Esophagus muscularis mucosa (tissue), 4 donors: ENCODE measurements at regions of chr2 and their contacts with region 1.

Region 1: GRCh38 chr2:237731663-237732062 is 66.9 kb upstream of the RBM44 start:
- DNase-seq: no peak
- H3K4me3 ChIP-seq: no peak overlapping the region
- H3K27ac ChIP-seq: peak overlapping the region; percentile 72 to 86 (median 85)
- H3K4me1 ChIP-seq: peaks cover 90 to 100% (median 97%) of the 10 kb centered on the region in 4 donors
- H3K27me3 ChIP-seq: no peaks in the 10 kb centered on the region
- CTCF ChIP-seq: no peak
- EP300 ChIP-seq: no peak
- POLR2A ChIP-seq: no peak

Region 2: GRCh38 chr2:237695201-237695780 is 36.4 kb before region 1 on chr2:
- intact Hi-C with region 1: loop called (anchors 5 kb)
- DNase-seq: no peak
- H3K4me3 ChIP-seq: peak overlapping the region; percentile 71 to 96 (median 87)
- H3K27ac ChIP-seq: peak overlapping the region; percentile 93 to 100 (median 98)
- H3K4me1 ChIP-seq: peaks cover 84 to 89% (median 88%) of the 10 kb centered on the region in 4 donors
- H3K27me3 ChIP-seq: no peaks in the 10 kb centered on the region
- CTCF ChIP-seq: no peak
- EP300 ChIP-seq: no peak
- POLR2A ChIP-seq: no peak